Left ventricle myocardium inferior (tissue), 1 donor: ENCODE measurements at regions of chr7 and their contacts with region 1.

Region 1: GRCh38 chr7:74026903-74027551 is 946 bp upstream of the ELN start:
- DNase-seq: peak; percentile 83
- H3K4me3 ChIP-seq: peak overlapping the region; percentile 74
- H3K27ac ChIP-seq: peak overlapping the region; percentile 88
- H3K4me1 ChIP-seq: peaks cover 68% of the 10 kb centered on the region
- H3K27me3 ChIP-seq: peaks cover 65% of the 10 kb centered on the region
- CTCF ChIP-seq: peak; percentile 97

Region 2: GRCh38 chr7:73851410-73852234 is 175.4 kb before region 1 on chr7:
- intact Hi-C with region 1: no loop called
- DNase-seq: no peak
- H3K4me3 ChIP-seq: no peak overlapping the region
- H3K27ac ChIP-seq: peak overlapping the region; percentile 66
- H3K4me1 ChIP-seq: peaks cover 12% of the 10 kb centered on the region
- H3K27me3 ChIP-seq: peaks cover 35% of the 10 kb centered on the region
- CTCF ChIP-seq: no peak

Region 3: DNA sequence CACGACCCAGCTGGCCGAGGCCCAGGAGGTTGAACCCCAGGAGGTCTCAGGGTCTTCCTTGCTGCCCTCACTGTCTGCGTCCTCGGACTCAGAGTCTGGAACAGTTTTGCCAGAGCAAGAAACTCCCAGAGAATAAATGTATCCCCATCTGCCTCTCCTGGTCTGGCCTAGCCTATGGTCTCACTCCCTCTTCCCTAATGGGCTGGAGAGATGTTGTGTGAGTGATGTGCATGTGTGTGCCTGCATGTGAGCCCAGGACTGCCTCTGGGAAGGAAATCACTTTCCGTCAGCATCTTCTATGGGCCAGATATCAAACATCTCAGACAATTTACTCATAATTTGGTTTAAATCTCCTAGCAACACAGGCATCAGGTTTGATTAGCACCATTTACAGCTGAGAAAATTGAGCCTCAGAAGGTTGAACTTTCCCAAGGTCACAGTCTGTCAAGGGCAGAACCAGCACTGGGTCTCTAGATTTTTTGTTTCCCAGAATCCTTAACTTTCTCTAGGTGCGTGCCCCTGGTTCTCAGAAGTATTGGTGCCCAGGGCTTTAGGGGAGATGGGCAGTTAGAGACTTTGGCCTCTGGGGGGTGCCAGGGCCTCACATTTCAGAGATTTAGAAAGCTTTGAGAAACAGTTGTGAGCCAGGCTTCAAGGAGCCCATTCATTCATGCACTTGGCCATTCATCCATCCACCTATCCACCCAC is 161.1 kb before region 1 on chr7:
- intact Hi-C with region 1: loop called (anchors 10 kb)
- DNase-seq: no peak
- H3K4me3 ChIP-seq: no peak overlapping the region
- H3K27ac ChIP-seq: no peak overlapping the region
- H3K4me1 ChIP-seq: peaks cover 18% of the 10 kb centered on the region
- H3K27me3 ChIP-seq: no peaks in the 10 kb centered on the region
- CTCF ChIP-seq: peak; percentile 78

Region 4: DNA sequence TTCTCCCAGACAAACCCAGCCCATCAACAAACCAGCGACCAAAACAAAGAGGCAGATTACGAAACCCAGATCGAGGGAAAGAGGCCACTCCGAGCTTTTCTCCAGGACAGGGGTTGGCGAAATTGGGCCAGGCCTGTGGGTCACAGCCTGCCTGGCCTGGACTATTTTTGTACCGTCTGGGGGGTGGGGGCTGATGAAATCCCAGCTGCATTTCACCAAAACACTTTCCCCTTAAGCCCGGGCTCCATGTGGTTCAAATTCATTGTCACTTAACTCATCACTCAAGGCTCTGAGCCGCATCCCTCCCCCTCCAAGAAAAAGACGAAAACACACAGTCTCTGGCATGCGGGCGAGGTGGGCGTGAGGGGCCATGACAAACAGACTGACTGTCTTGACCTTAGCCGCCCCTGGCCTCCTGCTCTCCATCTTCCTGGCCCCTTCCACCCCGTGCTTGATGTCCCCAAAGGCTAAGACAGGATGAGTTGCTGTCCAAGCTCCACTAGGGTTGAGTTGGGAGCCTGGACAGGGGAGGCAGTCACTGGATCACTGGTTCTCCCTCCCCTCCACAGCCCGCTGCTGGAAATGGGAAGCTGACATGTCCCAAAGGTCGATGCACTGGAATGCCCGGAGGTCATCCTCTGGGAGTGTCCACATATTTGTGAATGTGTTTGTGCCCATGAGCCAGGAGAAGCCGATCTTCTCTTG is 146.9 kb before region 1 on chr7:
- intact Hi-C with region 1: loop called (anchors 5 kb)
- DNase-seq: peak; percentile 71
- H3K4me3 ChIP-seq: peak overlapping the region; percentile 23
- H3K27ac ChIP-seq: peak overlapping the region; percentile 92
- H3K4me1 ChIP-seq: peaks cover 36% of the 10 kb centered on the region
- H3K27me3 ChIP-seq: peaks cover 58% of the 10 kb centered on the region
- CTCF ChIP-seq: no peak

Region 5: DNA sequence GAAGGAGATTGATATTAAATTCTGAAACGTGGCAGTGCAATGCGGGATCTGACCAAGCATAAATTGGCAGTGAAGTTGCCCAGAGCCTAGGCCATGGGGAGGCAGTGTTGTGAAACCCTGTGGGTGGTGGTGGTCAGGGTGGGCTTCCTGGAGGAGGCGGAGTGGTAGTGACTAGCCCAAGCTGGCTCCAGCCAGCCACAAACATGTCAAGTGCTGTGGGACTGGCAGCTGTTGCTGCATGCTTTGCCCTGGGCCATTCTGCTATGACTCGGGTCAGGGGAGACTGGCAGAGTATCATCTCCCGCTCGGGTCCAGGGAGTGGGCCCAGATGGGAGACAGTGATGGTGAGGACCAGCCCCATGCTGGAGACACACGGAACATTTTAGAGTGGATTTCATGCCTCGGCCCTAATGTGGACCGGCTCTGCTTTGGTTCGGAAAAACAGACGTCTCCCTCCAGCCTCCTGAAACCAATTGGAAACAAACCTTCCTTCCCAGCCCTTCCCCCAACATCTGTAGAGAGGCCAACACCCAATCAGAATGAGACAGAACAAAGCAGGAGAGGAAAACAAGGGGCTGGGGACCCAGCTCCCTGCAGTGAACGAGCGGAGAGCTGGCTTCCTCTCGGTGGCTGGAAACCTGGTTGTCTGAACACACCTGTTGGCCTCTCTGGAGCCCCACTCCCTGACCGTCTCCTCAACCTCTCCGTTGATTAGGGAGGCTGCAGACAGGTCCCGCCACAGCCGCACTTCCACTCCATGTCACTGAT is 107.9 kb before region 1 on chr7:
- intact Hi-C with region 1: no loop called
- DNase-seq: no peak
- H3K4me3 ChIP-seq: no peak overlapping the region
- H3K27ac ChIP-seq: no peak overlapping the region
- H3K4me1 ChIP-seq: peaks cover 9% of the 10 kb centered on the region
- H3K27me3 ChIP-seq: peaks cover 17% of the 10 kb centered on the region
- CTCF ChIP-seq: no peak

Region 6: DNA sequence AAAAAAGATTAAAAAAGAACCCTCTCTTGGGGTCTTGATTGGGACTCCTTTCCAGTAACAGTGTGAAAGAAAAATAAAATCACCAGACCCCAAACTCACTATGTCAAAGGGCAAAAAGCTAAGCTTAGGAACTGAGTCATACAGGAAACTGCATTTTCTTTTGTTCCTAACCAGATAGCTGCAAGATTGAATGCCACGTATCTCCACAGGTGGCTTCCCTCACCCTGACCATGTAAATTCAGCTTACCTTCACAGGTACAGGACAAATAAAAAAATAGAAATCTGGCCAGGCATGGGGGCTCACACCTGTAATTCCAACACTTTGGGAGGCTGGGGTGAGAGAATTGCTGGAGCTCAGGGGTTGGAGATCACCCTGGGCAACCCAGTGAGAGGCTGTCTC is 114.7 kb after region 1 on chr7:
- intact Hi-C with region 1: no loop called
- DNase-seq: no peak
- H3K4me3 ChIP-seq: no peak overlapping the region
- H3K27ac ChIP-seq: no peak overlapping the region
- H3K4me1 ChIP-seq: peaks cover 8% of the 10 kb centered on the region
- H3K27me3 ChIP-seq: no peaks in the 10 kb centered on the region
- CTCF ChIP-seq: no peak